ENCODE measurements at regions of chr18 and their contacts with region 1.

Region 1: DNA sequence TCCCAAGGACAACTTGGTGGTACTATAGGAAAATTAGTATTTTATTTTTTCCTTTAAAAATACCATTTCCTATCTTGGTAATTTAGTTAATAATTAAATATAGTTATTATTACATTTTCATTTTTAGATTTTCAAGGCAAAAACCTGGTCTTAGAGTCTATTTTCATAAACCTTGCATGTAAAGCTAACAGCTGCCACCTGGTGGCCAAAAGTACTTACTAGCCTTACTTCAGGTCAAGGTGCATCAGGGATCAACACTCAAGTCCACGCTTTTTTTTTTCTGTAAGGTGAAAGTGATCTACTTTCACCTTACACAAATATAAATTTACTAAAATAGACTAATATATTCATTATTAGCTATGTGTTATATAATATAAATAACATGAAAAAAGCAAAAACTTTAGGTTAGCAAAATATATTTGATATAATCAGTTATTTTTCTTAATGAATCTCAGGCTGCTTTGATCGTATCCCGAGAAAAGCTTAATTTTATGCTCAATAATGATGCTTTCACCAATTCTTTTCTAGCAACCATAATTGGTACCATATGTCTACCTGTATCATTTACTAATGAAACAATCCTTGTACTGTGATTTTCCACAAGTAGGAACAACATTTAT is 62.5 kb downstream of the RELCH start:
- DNase-seq: peak; percentile 50
- ATAC-seq: no peak

Region 2: GRCh38 chr18:61842146-61842545 is 407.4 kb before region 1 on chr18:
- intact Hi-C with region 1: no loop called
- DNase-seq: no peak
- ATAC-seq: no peak

Region 3: DNA sequence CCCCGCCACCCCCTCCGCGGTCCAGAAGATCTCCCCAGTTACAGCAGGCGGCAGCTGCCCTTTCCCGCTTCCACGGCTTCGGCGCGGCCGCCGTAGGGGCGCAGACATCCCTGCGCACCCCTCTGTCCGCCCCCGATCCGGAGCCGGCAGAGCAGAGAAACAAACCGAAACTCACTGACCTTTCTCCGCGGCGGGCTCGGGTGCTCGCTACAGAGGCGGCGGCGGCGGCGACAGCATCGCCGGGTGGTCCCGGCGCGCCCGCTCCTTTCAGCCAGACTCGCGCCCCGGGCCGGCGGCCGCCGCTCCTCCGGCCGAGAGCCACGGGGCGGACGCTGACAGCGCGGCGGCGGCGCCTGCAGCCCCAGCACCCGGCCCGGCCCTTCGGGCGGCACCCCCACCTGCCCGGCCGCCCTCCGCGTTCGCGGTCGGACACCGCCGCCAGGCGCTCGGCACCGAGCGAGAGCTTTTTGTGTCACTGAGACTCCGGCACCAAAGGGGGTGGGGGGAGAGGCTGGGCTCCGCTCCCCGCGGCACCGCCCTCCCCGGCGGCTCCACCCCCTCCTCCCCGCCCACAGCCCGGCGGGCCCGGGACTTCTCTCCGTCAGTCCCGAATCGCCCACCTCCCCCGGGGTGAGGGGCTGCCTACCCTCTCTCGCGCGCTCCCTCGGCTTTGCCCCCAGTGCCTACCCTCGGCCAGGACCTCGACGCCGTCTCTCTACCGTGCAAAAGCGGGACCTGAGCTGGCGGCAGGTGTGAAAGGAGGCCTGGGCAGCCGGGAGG is 355.4 kb before region 1 on chr18:
- intact Hi-C with region 1: no loop called
- DNase-seq: peak; percentile 89
- ATAC-seq: peak; percentile 95

Region 4: DNA sequence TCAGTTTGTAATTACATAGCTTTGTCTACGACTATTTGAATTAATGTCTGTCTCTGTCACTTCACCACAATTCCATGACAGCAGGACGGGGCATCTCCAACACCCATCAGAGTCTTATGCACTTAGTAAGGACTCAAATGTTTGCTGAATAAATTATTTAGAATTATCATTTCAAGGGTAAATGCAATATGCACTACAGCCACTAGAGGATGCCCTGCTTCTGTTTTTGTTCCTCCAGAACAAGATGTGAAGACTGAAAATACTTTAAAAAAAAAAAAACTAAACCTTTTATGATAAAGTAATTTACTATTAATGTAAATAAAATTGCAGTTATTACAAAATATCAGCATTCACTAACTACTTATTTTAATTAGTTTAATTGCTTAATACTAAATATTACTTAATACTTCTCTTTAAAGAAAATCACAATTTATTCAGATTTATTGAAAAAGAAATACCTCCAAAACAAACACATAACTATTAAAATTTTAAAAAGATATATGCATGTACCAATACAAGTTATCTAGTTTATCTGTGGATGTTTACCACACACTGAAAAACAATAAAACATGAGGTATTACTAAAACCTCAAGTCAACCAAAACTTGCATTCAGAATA is 65.9 kb before region 1 on chr18:
- intact Hi-C with region 1: loop called (anchors 2 kb)
- DNase-seq: no peak
- ATAC-seq: no peak

Region 5: DNA sequence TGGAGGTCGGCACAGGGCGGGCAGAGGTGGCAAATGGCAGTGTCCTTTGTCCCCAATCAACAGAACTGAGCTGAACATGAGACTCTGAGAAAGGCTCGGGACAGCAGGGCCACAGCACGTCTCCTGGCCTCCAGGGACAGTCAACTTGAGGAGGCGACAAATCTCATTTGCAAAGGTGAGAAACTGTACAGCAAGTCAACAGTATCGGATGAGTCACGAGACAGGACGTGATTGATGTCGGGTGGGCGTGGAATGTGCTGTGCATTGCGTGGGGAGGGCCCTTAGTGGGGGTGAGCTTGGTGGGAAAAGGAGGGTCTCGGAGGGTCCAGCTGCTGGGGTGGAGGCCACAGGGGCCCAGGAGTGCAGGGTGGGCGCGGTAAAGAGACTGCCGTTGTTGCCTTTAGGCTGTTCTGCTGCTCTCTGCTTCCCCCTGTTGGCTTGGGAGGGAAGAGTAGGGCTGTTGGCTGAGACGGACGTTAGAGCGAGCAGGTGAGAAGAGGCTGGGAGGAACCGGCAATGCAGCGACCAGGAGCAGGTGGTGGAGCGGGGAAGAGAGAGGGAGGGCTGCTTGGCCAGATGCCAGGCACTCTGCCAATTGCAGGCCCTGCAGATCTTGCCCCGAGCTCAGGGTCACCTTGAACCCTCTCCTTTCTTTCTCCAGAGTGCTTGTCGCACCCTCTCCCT is 905.7 kb after region 1 on chr18:
- intact Hi-C with region 1: no loop called
- DNase-seq: peak; percentile 63
- ATAC-seq: peak; percentile 89

Measured in left ventricle myocardium superior (tissue), 1 donor.